AG04450 (cell line): ENCODE measurements at regions of chr6 and their contacts with region 1.

Region 1: GRCh38 chr6:56933650-56934049 is 21.3 kb upstream of the BEND6 start:
- DNase-seq: no peak
- H3K4me3 ChIP-seq: no peak overlapping the region
- H3K27ac ChIP-seq: no peak overlapping the region
- H3K27me3 ChIP-seq: no peaks in the 10 kb centered on the region
- CTCF ChIP-seq: no peak

Region 2: DNA sequence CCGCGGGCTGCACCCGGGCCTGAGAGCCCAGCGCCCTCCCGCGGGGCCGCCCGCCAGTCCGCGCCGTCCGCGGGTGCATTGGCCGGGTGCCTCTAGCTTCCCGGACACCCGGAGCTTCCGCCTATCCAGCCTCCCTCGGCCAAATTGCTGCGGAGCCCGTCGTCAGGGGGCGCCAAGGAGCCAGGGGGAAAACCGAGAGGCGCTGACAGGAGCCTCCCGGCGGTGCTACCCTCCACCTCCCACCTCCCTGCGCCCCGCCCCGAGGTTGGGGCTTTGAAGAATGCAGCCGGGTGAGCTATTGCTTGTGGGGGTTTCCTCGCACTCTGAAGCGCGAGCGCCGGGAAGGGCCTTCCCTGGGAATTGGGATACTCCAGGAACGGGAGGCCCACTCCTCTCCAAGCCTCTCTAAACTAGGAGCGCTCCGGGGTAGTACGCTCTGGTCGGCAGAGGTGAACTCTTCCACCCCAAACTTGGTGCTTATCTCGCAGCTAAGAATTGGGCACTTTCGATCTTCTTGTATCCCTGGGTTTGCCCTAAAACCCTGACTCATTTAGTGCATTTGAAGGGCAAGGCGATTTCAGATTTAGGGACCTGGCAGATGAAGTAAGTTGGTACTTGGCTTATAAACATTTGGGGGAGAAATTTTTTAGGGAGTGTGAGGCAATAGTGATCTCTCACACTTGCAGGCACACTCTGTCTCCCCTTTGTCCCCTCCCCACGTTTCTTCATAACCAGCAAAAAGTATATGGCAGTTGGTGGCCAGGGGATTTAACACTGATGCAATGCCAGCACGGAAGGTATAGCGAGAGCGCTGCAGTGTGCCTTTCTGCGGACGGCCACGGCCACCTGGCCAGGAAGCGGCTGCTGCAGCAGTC is 21.8 kb after region 1 on chr6:
- CTCF ChIA-PET with region 1: interaction called, 10 read pairs
- POLR2A ChIA-PET with region 1: interaction called, 3 read pairs
- DNase-seq: peak; percentile 79
- H3K4me3 ChIP-seq: peak overlapping the region; percentile 73
- H3K27ac ChIP-seq: peak overlapping the region; percentile 79
- H3K27me3 ChIP-seq: no peaks in the 10 kb centered on the region
- CTCF ChIP-seq: peak; percentile 87